ENCODE measurements at regions of chr1 and their contacts with region 1.

Region 1: DNA sequence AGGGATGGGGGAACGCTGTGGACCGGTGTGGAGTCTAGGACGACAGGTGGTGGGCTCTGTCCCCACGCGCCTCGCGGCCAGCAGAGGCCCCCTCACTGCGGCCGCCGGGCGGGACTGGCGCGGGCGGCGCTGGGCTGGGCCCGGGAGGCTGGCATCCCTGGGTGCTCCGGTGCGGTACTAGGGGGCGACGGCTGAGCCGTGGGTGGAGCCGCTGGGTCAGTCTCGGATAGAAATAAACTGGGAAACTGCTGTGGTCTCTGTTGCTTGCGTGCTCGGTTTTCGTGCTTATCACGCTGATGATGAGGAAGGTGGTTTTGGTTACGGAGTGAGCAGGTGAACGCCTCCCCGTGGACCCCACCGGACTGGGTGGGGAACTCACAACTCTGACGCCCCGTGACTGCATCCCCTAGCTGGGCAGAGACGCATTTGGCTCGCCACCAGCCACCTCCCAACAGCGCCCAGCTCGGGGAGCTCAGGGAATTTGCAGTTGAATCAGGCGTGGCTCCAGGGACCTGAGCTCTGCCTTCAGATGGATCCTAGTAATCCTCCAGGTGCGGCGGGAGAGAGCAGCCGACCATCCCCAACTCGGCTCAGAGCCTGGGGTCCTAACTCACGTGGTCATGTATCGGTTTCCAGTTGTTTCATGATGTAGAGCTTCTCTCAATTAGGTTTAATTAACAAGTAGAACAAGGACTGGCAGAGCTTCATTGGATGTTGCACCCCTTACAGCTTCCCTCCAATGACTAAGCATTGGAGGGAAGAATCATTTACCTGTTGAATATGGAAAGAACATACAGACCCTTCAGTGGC is 32.1 kb downstream of the HSD17B7 start:
- DNase-seq: peak; percentile 34
- H3K4me3 ChIP-seq: peak overlapping the region; percentile 73
- H3K27ac ChIP-seq: no peak overlapping the region
- H3K4me1 ChIP-seq: peaks cover 4% of the 10 kb centered on the region; the same call in 1 of the 2 replicates
- H3K27me3 ChIP-seq: no peaks in the 10 kb centered on the region

Region 2: GRCh38 chr1:162357681-162358266 is 464.8 kb before region 1 on chr1:
- in situ Hi-C with region 1: loop called (anchors 25 kb)
- DNase-seq: peak; percentile 74
- H3K4me3 ChIP-seq: no peak overlapping the region
- H3K27ac ChIP-seq: no peak overlapping the region
- H3K4me1 ChIP-seq: no peaks in the 10 kb centered on the region
- H3K27me3 ChIP-seq: no peaks in the 10 kb centered on the region

Region 3: GRCh38 chr1:162633081-162633762 is 189.4 kb before region 1 on chr1:
- in situ Hi-C with region 1: no loop called
- DNase-seq: peak; percentile 69
- H3K4me3 ChIP-seq: peak overlapping the region; percentile 100
- H3K27ac ChIP-seq: peak overlapping the region; percentile 99
- H3K4me1 ChIP-seq: peaks cover 55% of the 10 kb centered on the region
- H3K27me3 ChIP-seq: no peaks in the 10 kb centered on the region